Activated CD4-positive, alpha-beta T cell treated with anti-CD3 and anti-CD28 coated beads, Interleukin-2, amount 10 ng/mL, durations not matched to agents 24 days and 14 days (primary cell): ENCODE measurements at regions of chr11 and their contacts with region 1.

Region 1: GRCh38 chr11:85947431-85948272 is 92.5 kb downstream of the CCDC83 start:
- DNase-seq: peak; percentile 66
- H3K4me3 Mint-ChIP-seq: peak overlapping the region; percentile 62
- H3K27ac Mint-ChIP-seq: peak overlapping the region; percentile 94
- H3K4me1 Mint-ChIP-seq: peaks cover 39% of the 10 kb centered on the region
- H3K27me3 Mint-ChIP-seq: no peaks in the 10 kb centered on the region

Region 2: GRCh38 chr11:85752890-85753581 is 194.6 kb before region 1 on chr11:
- intact Hi-C with region 1: loop called (anchors 2 kb)
- DNase-seq: peak; percentile 97
- H3K4me3 Mint-ChIP-seq: peak overlapping the region; percentile 78
- H3K27ac Mint-ChIP-seq: peak overlapping the region; percentile 97
- H3K4me1 Mint-ChIP-seq: peaks cover 88% of the 10 kb centered on the region
- H3K27me3 Mint-ChIP-seq: peaks cover 2% of the 10 kb centered on the region

Region 3: DNA sequence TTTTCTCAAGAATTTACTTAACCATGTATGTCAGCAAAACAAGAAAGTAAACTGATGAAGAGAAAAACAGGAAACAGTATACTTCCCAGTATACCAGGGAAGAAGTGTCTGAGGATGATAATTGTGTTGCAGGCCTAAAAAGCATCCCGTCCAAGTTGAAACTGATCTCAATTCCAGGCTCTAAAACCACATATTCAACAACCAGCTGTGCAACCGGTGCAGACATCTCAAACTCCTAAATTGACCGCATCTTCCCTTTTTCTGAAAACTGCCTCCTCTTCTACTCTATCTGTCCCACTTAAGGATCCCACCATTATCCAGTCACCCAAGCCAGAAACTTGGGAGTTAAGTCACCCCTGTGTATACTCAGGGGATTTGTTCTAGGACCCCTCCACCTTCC is 45.3 kb before region 1 on chr11:
- intact Hi-C with region 1: no loop called
- DNase-seq: no peak
- H3K4me3 Mint-ChIP-seq: no peak overlapping the region
- H3K27ac Mint-ChIP-seq: no peak overlapping the region
- H3K4me1 Mint-ChIP-seq: no peaks in the 10 kb centered on the region
- H3K27me3 Mint-ChIP-seq: peaks cover 6% of the 10 kb centered on the region

Region 4: DNA sequence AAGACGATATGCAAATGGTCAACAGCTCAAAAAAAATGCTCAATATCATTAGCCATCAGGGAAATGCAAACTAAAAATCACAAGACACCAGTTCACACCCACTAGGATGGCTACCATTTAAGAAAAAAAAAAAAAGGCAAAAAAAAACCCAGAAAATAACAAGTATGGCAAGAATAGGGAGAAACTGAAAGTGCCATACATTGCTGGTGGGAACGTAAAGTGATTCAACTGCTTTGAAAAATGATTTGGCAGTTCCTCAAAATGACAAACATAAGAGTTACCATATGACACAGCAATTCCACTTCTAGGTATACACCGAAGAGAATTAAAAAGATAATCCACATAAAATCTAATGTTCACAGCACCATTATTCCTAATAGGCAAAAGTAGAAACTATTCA is 73.7 kb after region 1 on chr11:
- intact Hi-C with region 1: loop called (anchors 5 kb)
- DNase-seq: no peak
- H3K4me3 Mint-ChIP-seq: no peak overlapping the region
- H3K27ac Mint-ChIP-seq: peak overlapping the region; percentile 51
- H3K4me1 Mint-ChIP-seq: peaks cover 31% of the 10 kb centered on the region
- H3K27me3 Mint-ChIP-seq: no peaks in the 10 kb centered on the region

Region 5: DNA sequence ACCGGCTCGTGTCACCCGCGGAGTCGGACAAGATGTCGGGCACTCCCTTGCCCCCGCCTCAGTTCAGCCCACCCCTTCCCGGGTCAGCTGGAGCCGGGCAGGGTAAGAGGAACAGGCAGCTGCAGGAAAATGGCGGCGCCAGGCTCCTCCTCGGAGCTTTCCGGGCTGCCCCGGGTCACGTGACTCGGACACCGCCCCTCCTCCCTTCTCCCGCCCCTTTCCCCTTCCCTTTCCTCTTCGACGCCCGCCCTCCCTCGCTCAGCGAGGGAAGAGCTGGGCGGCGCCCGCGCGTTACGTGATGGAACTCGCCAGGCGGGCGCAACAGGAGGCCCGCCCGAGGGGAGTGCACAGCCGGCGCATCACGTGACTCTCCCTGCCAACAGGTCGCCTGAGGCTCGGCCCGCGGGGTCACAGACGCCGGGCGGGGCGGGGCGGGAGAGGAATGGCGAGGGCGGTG is 121.3 kb after region 1 on chr11 and contains the start of gene PICALM:
- intact Hi-C with region 1: loop called (anchors 5 kb)
- DNase-seq: peak; percentile 99
- H3K4me3 Mint-ChIP-seq: peak within 1 kb of the TSS; percentile 100
- H3K27ac Mint-ChIP-seq: peak within 1 kb of the TSS; percentile 97
- H3K4me1 Mint-ChIP-seq: peaks cover 33% of the 10 kb centered on the region
- H3K27me3 Mint-ChIP-seq: no peaks in the 10 kb centered on the region
- total RNA-seq, gene PICALM: 141 and 156 TPM in 2 replicates

Region 6: DNA sequence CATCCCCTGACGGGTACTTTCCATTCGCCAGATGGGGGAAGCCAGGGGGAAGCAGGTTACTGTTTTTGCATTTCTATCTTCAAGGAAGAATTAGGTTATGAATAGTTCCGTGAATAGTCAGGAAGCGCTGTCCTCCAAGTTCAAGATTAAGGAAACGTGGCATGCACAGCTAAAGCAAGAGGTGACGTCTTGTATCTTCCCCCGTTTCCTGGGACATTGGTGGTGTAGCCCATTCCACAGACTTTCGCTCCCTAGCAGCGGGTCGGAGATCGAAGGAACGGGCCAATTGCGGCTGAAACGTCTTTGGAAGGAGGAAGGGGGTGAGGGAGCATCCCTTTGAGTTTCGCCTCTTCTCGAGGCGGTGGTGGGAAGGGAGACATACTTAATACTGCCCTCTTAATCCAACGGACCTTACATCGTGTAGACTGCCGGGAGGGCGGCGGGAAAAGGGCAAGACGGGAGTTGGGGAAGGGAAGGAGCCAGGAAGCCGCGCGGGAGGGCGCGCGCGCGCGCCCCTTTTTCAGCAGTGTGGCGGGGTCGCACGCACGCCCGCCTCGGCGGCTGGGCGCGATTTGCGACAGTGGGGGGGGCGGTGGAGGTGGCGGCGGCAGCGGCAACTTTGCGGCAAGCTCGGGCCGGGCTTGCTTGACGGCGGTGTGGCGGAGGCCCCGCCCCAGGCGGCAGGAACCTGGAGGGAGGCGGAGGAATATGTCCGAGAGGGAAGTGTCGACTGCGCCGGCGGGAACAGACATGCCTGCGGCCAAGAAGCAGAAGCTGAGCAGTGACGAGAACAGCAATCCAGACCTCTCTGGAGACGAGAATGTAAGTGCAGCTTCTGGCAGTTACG is 297.1 kb after region 1 on chr11 and contains the start of gene EED:
- intact Hi-C with region 1: loop called (anchors 5 kb)
- DNase-seq: peak; percentile 98
- H3K4me3 Mint-ChIP-seq: no peak within 1 kb of the TSS
- H3K27ac Mint-ChIP-seq: no peak within 1 kb of the TSS
- H3K4me1 Mint-ChIP-seq: peaks cover 34% of the 10 kb centered on the region
- H3K27me3 Mint-ChIP-seq: no peaks in the 10 kb centered on the region
- total RNA-seq, gene EED: 269 TPM in 2 replicates

Region 7: DNA sequence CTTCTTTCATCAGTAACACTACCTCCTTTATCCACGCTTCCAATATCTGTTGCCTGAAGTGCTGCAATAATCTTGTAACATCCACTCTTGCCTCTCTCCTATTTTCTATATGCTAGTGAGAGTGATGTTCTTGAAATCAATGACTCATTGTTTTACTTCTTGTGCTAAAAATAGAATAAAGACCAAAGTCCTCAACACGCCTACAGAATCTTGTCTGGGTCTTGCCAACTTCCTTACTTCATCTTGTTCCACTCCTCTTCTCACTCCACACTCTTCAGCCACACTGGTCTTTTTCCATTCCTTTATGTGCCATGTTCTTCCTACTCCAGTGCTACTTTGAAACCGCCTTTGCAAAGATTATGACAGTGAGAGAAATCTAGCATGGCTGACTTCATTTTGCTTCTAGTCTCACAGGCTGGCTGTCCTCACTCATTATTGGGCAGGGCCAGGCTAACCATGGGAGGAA is 563.5 kb after region 1 on chr11:
- intact Hi-C with region 1: loop called (anchors 5 kb)
- DNase-seq: no peak
- H3K4me3 Mint-ChIP-seq: no peak overlapping the region
- H3K27ac Mint-ChIP-seq: no peak overlapping the region
- H3K4me1 Mint-ChIP-seq: no peaks in the 10 kb centered on the region
- H3K27me3 Mint-ChIP-seq: peaks cover under 1% of the 10 kb centered on the region

Region 8: DNA sequence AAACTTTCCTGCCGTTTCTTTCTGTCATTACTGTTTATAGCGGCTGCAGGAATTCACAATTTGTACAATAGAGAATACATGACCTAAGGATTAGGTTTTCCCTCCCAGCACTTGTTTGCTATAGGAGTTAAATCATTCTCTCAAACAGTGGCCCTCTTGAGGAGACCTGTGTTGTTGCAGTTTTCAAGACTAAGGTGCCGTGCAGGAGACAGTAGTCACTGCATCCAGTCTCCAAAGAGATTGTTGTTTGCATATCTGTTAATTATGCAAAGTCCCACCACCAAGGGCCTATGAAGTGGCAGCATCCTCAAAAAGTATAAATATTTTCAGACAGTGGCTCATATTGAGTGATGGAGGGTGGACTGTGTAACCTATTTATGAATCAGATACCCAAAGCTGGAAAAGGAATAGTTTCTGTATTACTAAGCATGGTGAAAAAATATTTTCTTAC is 855.0 kb after region 1 on chr11:
- intact Hi-C with region 1: loop called (anchors 2 kb)
- DNase-seq: peak; percentile 74
- H3K4me3 Mint-ChIP-seq: peak overlapping the region; percentile 87
- H3K27ac Mint-ChIP-seq: peak overlapping the region; percentile 65
- H3K4me1 Mint-ChIP-seq: peaks cover 50% of the 10 kb centered on the region
- H3K27me3 Mint-ChIP-seq: peaks cover 27% of the 10 kb centered on the region